BJ (cell line): ENCODE measurements at regions of chr18 and their contacts with region 1.

Region 1: DNA sequence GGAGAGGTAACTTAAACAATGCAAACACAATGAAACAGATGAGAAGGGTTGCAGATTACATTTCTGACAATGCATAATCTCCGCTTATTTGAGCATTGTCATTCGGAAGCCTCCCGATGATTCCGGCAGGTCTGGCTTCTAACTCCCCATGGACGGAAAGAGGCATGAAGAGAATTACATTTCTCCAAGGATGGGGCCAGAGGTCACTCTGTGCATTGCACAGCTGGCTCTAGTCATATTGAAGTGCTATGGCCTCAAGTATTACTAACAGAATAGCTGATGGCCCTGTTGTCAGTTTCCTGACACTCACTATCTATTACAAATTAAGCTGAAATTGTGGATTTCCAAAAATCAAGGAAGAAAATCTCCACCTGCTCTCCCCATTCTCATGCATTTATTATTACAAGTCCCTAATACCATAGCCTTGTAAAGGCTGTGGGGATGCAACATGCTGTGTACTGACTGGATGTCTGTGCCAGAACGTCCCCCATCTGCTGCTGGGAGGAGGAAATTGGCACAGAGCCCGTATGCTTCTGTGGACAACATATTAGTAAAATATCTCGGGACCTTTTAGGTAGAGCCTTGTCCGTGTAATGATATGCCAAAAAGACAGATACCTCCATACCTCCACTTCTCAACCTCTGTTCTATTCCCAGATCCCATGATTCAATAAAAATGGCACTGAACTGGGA is 168.1 kb downstream of the SETBP1 start:
- DNase-seq: no peak
- H3K4me3 ChIP-seq: no peak overlapping the region
- H3K27me3 ChIP-seq: no peaks in the 10 kb centered on the region; the same call in 1 of the 2 replicates
- CTCF ChIP-seq: no peak

Region 2: GRCh38 chr18:44715245-44715644 is 133.5 kb before region 1 on chr18:
- CTCF ChIA-PET with region 1: no interaction called
- POLR2A ChIA-PET with region 1: interaction called, 11 read pairs
- DNase-seq: peak; percentile 97
- H3K4me3 ChIP-seq: no peak overlapping the region
- H3K27me3 ChIP-seq: peaks cover 2% of the 10 kb centered on the region; the same call in 1 of the 2 replicates
- CTCF ChIP-seq: no peak